ENCODE measurements at regions of chr9 and their contacts with region 1.

Region 1: DNA sequence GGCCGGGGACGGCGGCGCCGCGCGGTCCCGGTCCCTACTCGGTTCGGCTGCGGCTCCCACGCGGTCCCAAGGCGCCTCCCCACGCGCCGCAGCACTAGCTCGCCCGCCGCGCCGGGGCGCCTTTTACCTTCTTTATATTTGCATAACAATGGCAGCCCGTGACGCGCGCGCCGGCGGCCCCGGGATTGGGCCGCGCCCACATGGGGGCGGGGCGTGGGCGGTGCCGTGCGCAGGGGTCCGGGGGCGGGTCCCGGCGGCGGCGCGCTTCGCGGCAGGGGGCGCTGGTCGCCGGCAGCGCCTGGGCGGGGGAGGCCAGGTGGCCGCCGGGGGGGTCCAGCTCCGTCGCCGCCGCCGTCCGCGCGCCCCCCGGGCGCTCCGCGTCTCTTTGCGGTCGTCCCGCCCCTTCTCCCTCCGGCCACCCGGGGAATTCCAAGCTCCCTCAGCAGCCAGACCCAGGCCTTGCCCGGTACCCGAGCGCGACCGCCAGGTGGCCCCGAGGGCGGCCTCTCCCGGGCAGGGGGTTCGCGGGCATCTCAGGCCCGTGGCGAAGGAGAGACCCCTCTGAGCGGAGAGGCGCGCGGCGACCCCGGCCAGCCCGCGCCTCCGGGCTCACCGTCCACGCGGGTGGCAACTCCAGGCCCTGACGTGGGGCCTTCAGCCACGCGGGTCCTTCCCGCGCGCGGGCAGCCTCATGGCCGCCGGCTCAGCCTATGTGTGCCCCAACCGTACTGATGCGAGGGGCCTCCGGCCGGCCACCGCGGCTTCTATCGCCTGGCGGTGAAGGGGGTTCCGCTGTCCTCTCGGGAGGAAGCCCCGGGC is at the start of gene NRARP:
- DNase-seq: peak; percentile 95
- H3K27ac ChIP-seq: peak within 1 kb of the TSS; percentile 92
- CTCF ChIP-seq: peak; percentile 92

Region 2: GRCh38 chr9:137277329-137278041 is 24.9 kb before region 1 on chr9 and contains the start of gene TOR4A:
- CTCF ChIA-PET with region 1: interaction called, 13 read pairs
- POLR2A ChIA-PET with region 1: interaction called, 5 read pairs
- DNase-seq: peak; percentile 97
- H3K27ac ChIP-seq: peak within 1 kb of the TSS; percentile 94
- CTCF ChIP-seq: peak; percentile 73

Region 3: GRCh38 chr9:137313956-137314560 is 11.7 kb after region 1 on chr9:
- CTCF ChIA-PET with region 1: interaction called, 11 read pairs
- POLR2A ChIA-PET with region 1: interaction called, 3 read pairs
- DNase-seq: peak; percentile 5
- H3K27ac ChIP-seq: peak overlapping the region; percentile 64
- CTCF ChIP-seq: no peak

Region 4: GRCh38 chr9:137445275-137445807 is 143.0 kb after region 1 on chr9:
- CTCF ChIA-PET with region 1: interaction called, 12 read pairs
- POLR2A ChIA-PET with region 1: interaction called, 4 read pairs
- DNase-seq: peak; percentile 87
- H3K27ac ChIP-seq: peak overlapping the region; percentile 40
- CTCF ChIP-seq: peak; percentile 99

Measured in RWPE1 (cell line).